ENCODE measurements at regions of chr3 and their contacts with region 1.

Region 1: DNA sequence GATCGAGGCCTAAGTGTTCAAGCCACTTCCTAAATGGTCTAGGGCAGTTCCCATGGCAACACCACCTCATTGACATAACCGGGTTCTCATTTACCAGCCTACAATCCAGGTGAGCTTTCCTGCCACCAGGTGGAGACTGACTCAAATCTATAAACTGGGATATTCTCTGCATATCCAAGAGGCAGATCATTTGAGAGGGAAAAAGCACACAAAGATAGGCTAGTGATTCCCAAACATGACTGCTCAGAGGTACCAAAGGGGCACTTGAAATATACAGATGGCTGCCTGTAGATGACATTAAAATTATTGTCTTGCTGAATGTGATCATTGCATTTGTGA is 141.3 kb upstream of the PROK2 start:
- DNase-seq: peak; percentile 65
- H3K4me3 Mint-ChIP-seq: no peak overlapping the region
- H3K27ac Mint-ChIP-seq: no peak overlapping the region
- H3K4me1 Mint-ChIP-seq: peaks cover 9% of the 10 kb centered on the region
- H3K27me3 Mint-ChIP-seq: peaks cover 37% of the 10 kb centered on the region
- CTCF ChIP-seq: peak; percentile 30

Region 2: DNA sequence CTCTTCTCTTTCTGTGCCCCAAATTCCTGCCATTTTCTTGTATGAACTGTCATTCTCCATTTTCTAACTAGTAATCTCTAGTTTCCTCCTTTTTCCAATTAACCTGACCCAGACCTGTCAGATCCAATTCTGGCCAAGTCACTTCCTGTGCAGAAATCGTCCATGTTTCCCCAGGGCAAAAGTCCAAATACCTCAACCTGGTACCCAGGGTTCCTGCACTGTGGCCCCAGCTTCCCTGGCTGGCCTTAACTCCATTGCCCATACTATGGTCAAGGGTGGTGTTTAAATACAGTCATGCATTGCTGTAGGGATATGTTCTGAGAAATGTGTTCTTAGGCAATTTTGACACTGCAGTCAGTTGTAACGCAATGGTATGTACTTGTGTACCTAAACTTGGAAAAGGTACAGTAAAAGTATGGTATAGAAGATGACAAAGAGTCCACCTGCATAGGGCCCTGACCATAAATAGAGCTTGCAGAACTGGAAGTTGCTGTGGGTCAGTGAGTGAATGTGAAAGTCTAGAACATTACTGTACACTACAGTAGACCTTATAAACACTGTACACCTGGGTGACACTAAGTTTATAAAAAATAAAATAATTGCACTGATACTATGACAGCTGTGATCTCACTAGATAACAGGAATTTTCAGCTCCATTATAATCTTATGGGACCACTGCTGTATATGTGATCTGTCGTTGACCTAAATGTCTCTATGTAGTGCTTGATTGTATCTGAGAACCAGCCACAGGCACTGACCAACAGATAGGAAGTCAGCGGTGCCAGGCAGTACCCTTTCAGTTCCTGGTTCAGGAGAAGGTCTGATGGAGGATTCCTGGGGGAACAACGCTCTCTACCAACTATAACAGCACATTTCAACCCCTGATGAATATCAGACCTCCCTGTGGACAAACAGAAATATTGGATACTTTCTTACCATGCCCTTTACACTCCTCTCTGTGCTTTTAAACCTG is 194.9 kb after region 1 on chr3:
- CTCF ChIA-PET with region 1: no interaction called
- intact Hi-C with region 1: no loop called
- DNase-seq: no peak
- H3K4me3 Mint-ChIP-seq: no peak overlapping the region
- H3K27ac Mint-ChIP-seq: no peak overlapping the region
- H3K4me1 Mint-ChIP-seq: peaks cover 21% of the 10 kb centered on the region
- H3K27me3 Mint-ChIP-seq: peaks cover 8% of the 10 kb centered on the region
- CTCF ChIP-seq: no peak

Region 3: GRCh38 chr3:72265256-72266015 is 339.2 kb after region 1 on chr3:
- CTCF ChIA-PET with region 1: no interaction called
- intact Hi-C with region 1: loop called (anchors 2 kb)
- DNase-seq: no peak
- H3K4me3 Mint-ChIP-seq: no peak overlapping the region
- H3K27ac Mint-ChIP-seq: no peak overlapping the region
- H3K4me1 Mint-ChIP-seq: no peaks in the 10 kb centered on the region
- H3K27me3 Mint-ChIP-seq: peaks cover 50% of the 10 kb centered on the region
- CTCF ChIP-seq: no peak

Measured in Calu3 (cell line).